AG04450 (cell line): ENCODE measurements at regions of chr15 and their contacts with region 1.

Region 1: DNA sequence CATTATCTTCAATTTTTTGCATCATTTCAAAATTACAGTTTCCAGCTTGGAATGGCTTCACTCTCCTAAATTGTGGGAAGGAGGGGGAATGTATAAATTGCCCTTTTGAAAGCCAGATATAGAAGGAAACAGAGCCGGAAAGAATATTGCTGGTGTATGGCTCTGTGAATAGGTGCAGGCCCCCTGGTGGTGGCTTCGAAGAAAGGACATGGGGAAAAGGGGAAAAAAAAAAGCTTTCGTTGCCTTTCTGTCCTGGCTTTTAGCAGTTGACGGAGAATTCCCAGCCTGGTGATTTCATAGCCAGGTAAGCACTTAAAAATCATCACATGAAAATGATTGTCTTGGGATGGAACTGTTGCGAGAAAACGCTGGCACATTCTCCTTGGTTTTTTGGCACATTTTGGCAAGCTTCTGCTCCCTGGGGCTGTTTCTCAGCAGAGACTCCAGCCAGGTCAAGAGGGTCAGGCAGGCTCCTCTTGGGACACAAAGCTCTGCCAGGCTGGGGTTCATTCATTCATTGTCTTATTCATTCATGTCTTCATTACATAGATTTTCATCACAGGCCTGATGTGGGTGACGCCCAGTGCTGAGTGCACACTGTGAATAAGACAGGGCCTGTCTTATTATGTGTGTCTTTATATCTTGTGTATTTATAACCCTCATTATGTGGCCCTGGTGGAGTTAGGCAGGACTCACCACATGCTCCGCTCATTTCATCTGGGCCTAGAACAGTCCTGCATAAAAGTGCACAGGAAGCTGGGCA is 300.0 kb upstream of the TPM1 start:
- DNase-seq: peak; percentile 73
- H3K4me3 ChIP-seq: no peak overlapping the region
- H3K27ac ChIP-seq: peak overlapping the region; percentile 35
- H3K27me3 ChIP-seq: no peaks in the 10 kb centered on the region
- CTCF ChIP-seq: peak; percentile 92

Region 2: GRCh38 chr15:62306851-62307504 is 435.6 kb before region 1 on chr15:
- CTCF ChIA-PET with region 1: interaction called, 12 read pairs
- POLR2A ChIA-PET with region 1: no interaction called
- DNase-seq: peak; percentile 23
- H3K4me3 ChIP-seq: no peak overlapping the region
- H3K27ac ChIP-seq: no peak overlapping the region
- H3K27me3 ChIP-seq: peaks cover 3% of the 10 kb centered on the region
- CTCF ChIP-seq: peak; percentile 73

Region 3: GRCh38 chr15:62390791-62391640 is 351.6 kb before region 1 on chr15:
- CTCF ChIA-PET with region 1: interaction called, 13 read pairs
- POLR2A ChIA-PET with region 1: no interaction called
- DNase-seq: no peak
- H3K4me3 ChIP-seq: peak overlapping the region; percentile 98
- H3K27ac ChIP-seq: peak overlapping the region; percentile 31
- H3K27me3 ChIP-seq: no peaks in the 10 kb centered on the region
- CTCF ChIP-seq: peak; percentile 4; the same call in 1 of the 2 replicates

Region 4: GRCh38 chr15:62549345-62549970 is 193.1 kb before region 1 on chr15:
- CTCF ChIA-PET with region 1: interaction called, 15 read pairs
- POLR2A ChIA-PET with region 1: no interaction called
- DNase-seq: no peak
- H3K4me3 ChIP-seq: no peak overlapping the region
- H3K27ac ChIP-seq: no peak overlapping the region
- H3K27me3 ChIP-seq: no peaks in the 10 kb centered on the region
- CTCF ChIP-seq: peak; percentile 49

Region 5: GRCh38 chr15:62726461-62726860 is 16.1 kb before region 1 on chr15:
- CTCF ChIA-PET with region 1: interaction called, 16 read pairs
- POLR2A ChIA-PET with region 1: no interaction called
- DNase-seq: no peak
- H3K4me3 ChIP-seq: no peak overlapping the region
- H3K27ac ChIP-seq: no peak overlapping the region
- H3K27me3 ChIP-seq: no peaks in the 10 kb centered on the region
- CTCF ChIP-seq: no peak

Region 6: DNA sequence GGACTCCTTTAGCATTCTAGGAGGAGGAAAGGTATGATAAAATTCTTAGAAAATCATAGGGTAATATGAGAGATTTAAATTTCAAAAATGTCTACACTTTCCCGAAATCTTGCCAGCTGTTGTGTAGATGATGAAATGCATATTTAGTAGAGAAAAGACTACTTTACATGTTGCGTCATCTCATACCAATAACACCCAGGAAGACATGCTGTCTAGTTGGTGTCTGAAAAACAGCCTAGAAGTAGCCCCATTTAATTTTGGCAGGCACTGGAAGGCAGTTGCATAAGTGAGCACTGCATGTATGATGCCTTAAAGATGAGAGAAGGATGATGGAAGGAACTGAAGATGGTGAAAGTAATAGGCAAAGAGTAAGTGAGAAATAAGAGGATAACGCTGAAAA is 10.5 kb before region 1 on chr15:
- CTCF ChIA-PET with region 1: interaction called, 16 read pairs
- POLR2A ChIA-PET with region 1: no interaction called
- DNase-seq: no peak
- H3K4me3 ChIP-seq: no peak overlapping the region
- H3K27ac ChIP-seq: no peak overlapping the region
- H3K27me3 ChIP-seq: no peaks in the 10 kb centered on the region
- CTCF ChIP-seq: no peak

Region 7: DNA sequence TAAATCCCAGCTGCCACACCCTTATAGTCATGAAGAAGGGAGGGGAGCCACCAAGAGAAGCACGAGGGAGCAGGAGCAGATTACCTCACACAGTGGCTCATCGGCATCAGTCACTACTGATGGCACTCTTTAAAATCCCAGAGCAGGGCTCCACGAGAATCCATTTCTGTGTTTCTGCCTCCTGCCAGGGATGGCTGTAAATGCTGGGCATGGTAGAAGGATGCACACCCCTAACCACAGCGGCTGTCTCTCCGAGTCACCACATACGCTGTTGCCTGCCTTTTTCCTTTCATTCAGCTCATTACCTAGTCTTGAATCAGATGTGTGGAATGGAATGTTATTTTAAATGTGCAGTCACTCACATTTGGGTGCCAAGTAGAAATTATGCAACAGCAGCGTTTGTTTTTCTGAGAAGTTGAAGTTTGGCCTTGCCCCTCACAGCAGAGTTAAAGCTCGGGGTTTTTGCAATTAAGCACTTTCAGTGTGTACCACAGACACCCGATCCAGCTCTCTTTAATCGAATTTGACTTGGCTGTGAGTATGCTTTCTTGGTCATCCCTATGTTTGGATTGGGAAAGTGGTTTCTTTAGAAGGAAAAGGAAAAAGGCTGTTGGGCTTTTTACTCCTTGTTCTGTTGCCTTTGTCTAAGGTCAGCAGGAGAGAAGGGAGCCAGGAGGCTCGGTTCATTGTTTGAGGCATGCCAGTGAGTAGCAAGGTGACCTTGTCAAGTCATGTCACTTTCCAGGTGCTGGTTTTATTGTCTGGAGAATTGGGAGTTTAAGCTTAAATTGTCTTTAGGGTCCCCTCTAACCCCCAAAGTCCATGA is 15.7 kb after region 1 on chr15:
- CTCF ChIA-PET with region 1: interaction called, 52 read pairs
- POLR2A ChIA-PET with region 1: no interaction called
- DNase-seq: no peak
- H3K4me3 ChIP-seq: 0 out of 2 replicates have a peak overlapping the region, but pooled peaks have one; percentile 10
- H3K27ac ChIP-seq: peak overlapping the region; percentile 81
- H3K27me3 ChIP-seq: no peaks in the 10 kb centered on the region
- CTCF ChIP-seq: no peak